Ovary (tissue), 10 donors: ENCODE measurements at regions of chr5 and their contacts with region 1.

Region 1: DNA sequence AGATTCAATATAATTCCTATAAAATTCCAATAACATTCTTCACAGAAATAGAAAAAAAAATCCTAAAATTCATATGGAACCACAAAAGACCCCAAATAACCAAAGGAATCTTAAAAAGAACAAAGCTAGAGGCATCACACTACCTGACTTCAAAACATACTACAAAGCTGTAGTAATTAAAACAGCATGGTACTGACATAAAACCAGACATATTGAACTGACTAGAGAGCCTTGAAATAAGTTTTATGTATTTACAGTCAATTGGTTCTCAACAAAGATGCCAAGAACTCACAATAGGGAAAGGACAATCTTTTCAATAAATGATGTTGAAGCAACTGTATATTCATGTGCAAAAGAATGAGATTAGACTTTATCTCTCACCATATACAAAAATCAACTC is 36.9 kb downstream of the BTNL9 start:
- DNase-seq: no peak
- H3K4me3 ChIP-seq: no peak overlapping the region
- H3K27ac ChIP-seq: no peak overlapping the region
- H3K4me1 ChIP-seq: no peaks in the 10 kb centered on the region
- H3K27me3 ChIP-seq: no peaks in the 10 kb centered on the region
- CTCF ChIP-seq: no peak
- EP300 ChIP-seq: no peak
- POLR2A ChIP-seq: no peak

Region 2: GRCh38 chr5:179468696-179469095 is 1608.2 kb before region 1 on chr5:
- intact Hi-C with region 1: loop called in 1 of 4 experiments (anchors 5 kb)
- DNase-seq: no peak
- H3K4me3 ChIP-seq: no peak overlapping the region
- H3K27ac ChIP-seq: no peak overlapping the region
- H3K4me1 ChIP-seq: no peaks in the 10 kb centered on the region
- H3K27me3 ChIP-seq: no peaks in the 10 kb centered on the region
- CTCF ChIP-seq: no peak
- EP300 ChIP-seq: no peak
- POLR2A ChIP-seq: no peak